Gastrocnemius medialis (tissue), 4 donors: ENCODE measurements at regions of chr17 and their contacts with region 1.

Region 1: GRCh38 chr17:79019632-79020584 is 4.1 kb upstream of the C1QTNF1 start:
- DNase-seq: peak in 1 of 2 donors; percentile 68
- ATAC-seq: peak; percentile 39 to 72
- H3K4me3 ChIP-seq: peak overlapping the region in 1 of 4 donors; percentile 6
- H3K27ac ChIP-seq: peak overlapping the region; percentile 67 to 83 (median 78)
- H3K4me1 ChIP-seq: peaks cover 28 to 49% of the 10 kb centered on the region in 2 donors
- H3K27me3 ChIP-seq: no peaks in the 10 kb centered on the region
- CTCF ChIP-seq: peak; percentile 65 to 77 (median 71)
- POLR2A ChIP-seq: peak in 1 of 2 donors; percentile 12

Region 2: DNA sequence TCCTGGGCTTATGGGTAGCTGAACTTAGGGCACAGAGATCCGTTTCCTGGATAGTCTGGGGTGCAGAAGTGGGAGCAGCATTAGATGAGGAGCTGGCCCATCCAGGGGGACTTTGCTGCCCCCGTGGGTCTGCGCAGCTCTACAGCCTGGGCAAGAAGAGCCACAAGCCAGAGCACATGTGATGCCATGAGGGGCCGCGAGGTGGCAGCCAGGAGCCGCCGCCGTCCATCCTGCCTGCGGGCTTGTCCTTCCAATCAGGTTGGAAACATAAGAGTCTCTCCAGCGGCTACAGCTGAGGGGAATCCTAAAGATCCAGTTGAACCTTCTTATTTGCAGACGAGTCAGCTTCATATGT is 25.9 kb after region 1 on chr17:
- in situ Hi-C with region 1: no loop called
- intact Hi-C with region 1: loop called (anchors 1 kb)
- DNase-seq: peak; percentile 57 to 61
- ATAC-seq: peak; percentile 70 to 71
- H3K4me3 ChIP-seq: no peak overlapping the region
- H3K27ac ChIP-seq: peak overlapping the region; percentile 51 to 67 (median 59)
- H3K4me1 ChIP-seq: peaks cover 10 to 13% of the 10 kb centered on the region in 2 donors
- H3K27me3 ChIP-seq: peaks cover 0 to 3% (median 2%) of the 10 kb centered on the region in 3 donors
- CTCF ChIP-seq: peak; percentile 72 to 96 (median 86)
- POLR2A ChIP-seq: no peak

Region 3: GRCh38 chr17:79074650-79075445 is 54.9 kb after region 1 on chr17 and contains the start of gene ENGASE:
- in situ Hi-C with region 1: no loop called
- intact Hi-C with region 1: loop called (anchors 5 kb)
- DNase-seq: peak; percentile 89 to 93
- ATAC-seq: peak; percentile 83 to 89
- H3K4me3 ChIP-seq: peak within 1 kb of the TSS; percentile 73 to 88 (median 76)
- H3K27ac ChIP-seq: peak within 1 kb of the TSS; percentile 87 to 98 (median 93)
- H3K4me1 ChIP-seq: peaks cover 32 to 38% of the 10 kb centered on the region in 2 donors
- H3K27me3 ChIP-seq: no peaks in the 10 kb centered on the region
- CTCF ChIP-seq: no peak
- POLR2A ChIP-seq: peak; percentile 83 to 86
- total RNA-seq, gene ENGASE: 5.1 to 14.2 (median 9.3) TPM

Region 4: DNA sequence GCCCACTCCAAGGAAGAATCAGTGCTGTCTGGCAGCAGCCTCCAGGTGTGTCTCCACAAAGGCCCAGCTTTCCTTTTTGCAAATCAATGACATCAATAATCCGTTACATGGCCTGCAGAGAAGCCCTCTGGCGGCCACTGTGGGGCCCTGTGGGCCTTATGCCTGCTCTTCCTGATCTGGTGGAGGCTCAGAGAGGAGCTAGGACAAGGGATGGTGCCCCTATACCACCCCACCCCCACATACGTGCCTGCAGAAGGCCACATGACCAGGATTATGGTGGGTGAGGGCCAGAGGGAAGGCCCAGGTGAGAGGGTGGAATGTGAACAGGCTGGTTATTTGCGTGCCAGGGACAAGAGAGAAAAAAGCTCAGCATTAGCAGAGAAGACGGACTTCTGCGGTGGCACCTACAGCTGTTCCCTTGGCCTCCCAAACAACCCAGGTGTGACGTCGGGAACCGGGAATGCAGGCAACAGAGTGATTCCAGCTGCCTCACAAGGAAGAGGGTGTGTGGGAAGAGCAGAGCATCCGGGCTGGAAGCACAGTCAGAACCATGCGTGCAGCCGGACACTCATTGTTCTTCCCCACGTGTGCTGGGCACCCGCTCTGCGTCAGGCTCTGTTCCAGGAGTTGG is 1104.6 kb after region 1 on chr17:
- in situ Hi-C with region 1: no loop called
- intact Hi-C with region 1: loop called (anchors 5 kb)
- DNase-seq: no peak
- ATAC-seq: no peak
- H3K4me3 ChIP-seq: no peak overlapping the region
- H3K27ac ChIP-seq: no peak overlapping the region
- H3K4me1 ChIP-seq: no peaks in the 10 kb centered on the region
- H3K27me3 ChIP-seq: no peaks in the 10 kb centered on the region
- CTCF ChIP-seq: no peak
- POLR2A ChIP-seq: no peak